Calu3 (cell line): ENCODE measurements at regions of chr5 and their contacts with region 1.

Region 1: DNA sequence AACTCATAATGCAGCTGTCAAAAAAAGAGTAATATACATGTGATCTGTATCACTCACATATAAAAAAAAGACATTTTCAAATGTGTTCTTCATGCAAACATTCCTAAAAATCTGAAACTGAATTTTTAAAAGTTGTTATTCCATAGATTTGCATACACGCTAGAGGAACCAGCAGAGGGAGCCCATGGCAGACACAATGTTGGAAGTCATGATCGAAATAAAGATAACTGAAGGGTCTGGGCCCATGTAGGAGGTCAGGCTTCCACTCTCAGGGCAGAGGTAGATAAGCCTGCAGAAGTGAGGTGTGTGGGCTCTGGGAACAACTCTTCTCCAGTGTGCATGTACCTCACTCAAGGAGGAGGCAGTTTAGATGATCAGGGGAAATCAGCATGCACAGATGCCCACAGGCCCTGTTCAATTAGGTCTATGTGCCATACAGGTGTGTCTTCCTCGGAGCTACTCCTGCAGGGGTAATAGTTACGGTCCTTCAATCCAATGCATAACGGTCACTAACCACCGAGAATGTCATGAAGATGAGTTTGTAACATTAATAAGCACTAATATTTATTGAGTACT is 208.6 kb downstream of the EPB41L4A start:
- DNase-seq: peak; percentile 66
- H3K4me3 Mint-ChIP-seq: no peak overlapping the region
- H3K27ac Mint-ChIP-seq: no peak overlapping the region
- H3K4me1 Mint-ChIP-seq: peaks cover 17% of the 10 kb centered on the region
- H3K27me3 Mint-ChIP-seq: no peaks in the 10 kb centered on the region
- CTCF ChIP-seq: peak; percentile 55

Region 2: GRCh38 chr5:112125903-112126302 is 84.6 kb before region 1 on chr5:
- CTCF ChIA-PET with region 1: no interaction called
- intact Hi-C with region 1: no loop called
- DNase-seq: no peak
- H3K4me3 Mint-ChIP-seq: no peak overlapping the region
- H3K27ac Mint-ChIP-seq: no peak overlapping the region
- H3K4me1 Mint-ChIP-seq: no peaks in the 10 kb centered on the region
- H3K27me3 Mint-ChIP-seq: peaks cover 2% of the 10 kb centered on the region
- CTCF ChIP-seq: no peak

Region 3: DNA sequence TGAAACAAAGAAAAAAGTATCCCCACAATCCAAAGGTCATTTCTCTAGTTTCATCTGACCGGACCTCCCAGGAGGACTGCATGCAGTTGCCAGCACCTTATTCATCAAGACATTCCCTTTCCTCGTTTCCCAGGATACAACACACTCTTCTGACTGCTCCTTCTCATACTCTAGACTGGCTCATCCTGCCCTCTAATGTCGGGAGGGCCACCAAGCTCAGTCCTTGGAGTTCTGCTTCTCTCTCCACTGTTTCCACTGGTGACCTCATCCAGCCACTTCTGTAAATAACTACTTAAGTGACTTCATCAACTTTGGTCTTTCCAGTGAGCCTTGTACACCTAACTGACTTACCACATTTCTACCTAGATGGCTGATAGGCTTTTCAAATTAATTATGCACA is 29.5 kb after region 1 on chr5:
- CTCF ChIA-PET with region 1: no interaction called
- intact Hi-C with region 1: loop called (anchors 1 kb)
- DNase-seq: peak; percentile 58
- H3K4me3 Mint-ChIP-seq: no peak overlapping the region
- H3K27ac Mint-ChIP-seq: peak overlapping the region; percentile 8
- H3K4me1 Mint-ChIP-seq: peaks cover 49% of the 10 kb centered on the region
- H3K27me3 Mint-ChIP-seq: no peaks in the 10 kb centered on the region
- CTCF ChIP-seq: no peak

Region 4: GRCh38 chr5:112316006-112316405 is 105.5 kb after region 1 on chr5:
- CTCF ChIA-PET with region 1: no interaction called
- intact Hi-C with region 1: loop called (anchors 5 kb)
- DNase-seq: peak; percentile 39
- H3K4me3 Mint-ChIP-seq: no peak overlapping the region
- H3K27ac Mint-ChIP-seq: peak overlapping the region; percentile 60
- H3K4me1 Mint-ChIP-seq: peaks cover 49% of the 10 kb centered on the region
- H3K27me3 Mint-ChIP-seq: no peaks in the 10 kb centered on the region
- CTCF ChIP-seq: no peak